Activated naive CD4-positive, alpha-beta T cell treated with anti-CD3 and anti-CD28 coated beads for 36 hours (primary cell): ENCODE measurements at regions of chr4 and their contacts with region 1.

Region 1: GRCh38 chr4:164779811-164780216 is 25.9 kb downstream of the SMIM31 start:
- DNase-seq: peak; percentile 51
- H3K4me3 Mint-ChIP-seq: no peak overlapping the region
- H3K27ac Mint-ChIP-seq: no peak overlapping the region
- H3K4me1 Mint-ChIP-seq: no peaks in the 10 kb centered on the region
- H3K27me3 Mint-ChIP-seq: no peaks in the 10 kb centered on the region

Region 2: DNA sequence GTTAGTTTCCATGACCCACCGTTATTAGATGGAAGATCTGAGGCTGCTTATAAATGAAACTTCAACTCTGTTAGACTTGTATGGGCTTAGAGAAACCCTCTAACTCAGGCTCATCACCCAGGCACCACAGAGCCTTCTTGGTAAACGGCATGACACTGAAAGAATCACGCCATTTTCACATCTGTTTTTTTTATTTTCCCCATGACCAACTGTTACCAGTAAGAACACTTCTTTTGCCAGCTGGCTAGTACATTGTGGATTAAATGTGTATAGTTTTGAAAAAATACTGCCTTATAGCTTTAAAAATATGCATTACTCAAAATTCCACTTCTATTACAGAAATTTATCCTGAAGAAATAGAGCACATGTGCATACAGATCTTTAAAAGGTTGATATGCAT is 49.1 kb after region 1 on chr4:
- CTCF ChIA-PET with region 1: no interaction called
- intact Hi-C with region 1: no loop called
- DNase-seq: no peak
- H3K4me3 Mint-ChIP-seq: no peak overlapping the region
- H3K27ac Mint-ChIP-seq: no peak overlapping the region
- H3K4me1 Mint-ChIP-seq: no peaks in the 10 kb centered on the region
- H3K27me3 Mint-ChIP-seq: peaks cover 2% of the 10 kb centered on the region

Region 3: DNA sequence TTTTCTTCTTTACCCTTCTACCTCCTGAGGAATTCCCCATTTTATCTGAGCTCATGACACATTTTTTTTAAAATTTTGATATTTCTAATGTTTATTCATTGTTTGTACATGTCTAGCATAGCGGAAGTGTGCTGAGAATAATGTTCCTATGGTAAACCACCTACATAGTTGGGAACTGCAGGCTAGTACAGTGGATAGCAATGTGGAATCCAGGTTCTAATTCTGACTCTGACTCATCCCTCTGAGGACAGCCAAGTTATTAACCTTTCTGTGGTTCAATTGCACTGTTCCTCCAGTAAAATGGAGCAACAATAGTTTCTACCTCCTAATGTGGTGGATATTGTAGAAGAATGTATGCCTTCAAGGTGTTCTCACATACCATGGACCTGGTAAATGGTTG is 76.6 kb after region 1 on chr4:
- CTCF ChIA-PET with region 1: no interaction called
- intact Hi-C with region 1: no loop called
- DNase-seq: no peak
- H3K4me3 Mint-ChIP-seq: no peak overlapping the region
- H3K27ac Mint-ChIP-seq: no peak overlapping the region
- H3K4me1 Mint-ChIP-seq: no peaks in the 10 kb centered on the region
- H3K27me3 Mint-ChIP-seq: peaks cover 3% of the 10 kb centered on the region

Region 4: GRCh38 chr4:164997324-164997723 is 217.5 kb after region 1 on chr4:
- CTCF ChIA-PET with region 1: no interaction called
- intact Hi-C with region 1: loop called (anchors 10 kb)
- DNase-seq: no peak
- H3K4me3 Mint-ChIP-seq: no peak overlapping the region
- H3K27ac Mint-ChIP-seq: no peak overlapping the region
- H3K4me1 Mint-ChIP-seq: no peaks in the 10 kb centered on the region
- H3K27me3 Mint-ChIP-seq: peaks cover 5% of the 10 kb centered on the region

Region 5: DNA sequence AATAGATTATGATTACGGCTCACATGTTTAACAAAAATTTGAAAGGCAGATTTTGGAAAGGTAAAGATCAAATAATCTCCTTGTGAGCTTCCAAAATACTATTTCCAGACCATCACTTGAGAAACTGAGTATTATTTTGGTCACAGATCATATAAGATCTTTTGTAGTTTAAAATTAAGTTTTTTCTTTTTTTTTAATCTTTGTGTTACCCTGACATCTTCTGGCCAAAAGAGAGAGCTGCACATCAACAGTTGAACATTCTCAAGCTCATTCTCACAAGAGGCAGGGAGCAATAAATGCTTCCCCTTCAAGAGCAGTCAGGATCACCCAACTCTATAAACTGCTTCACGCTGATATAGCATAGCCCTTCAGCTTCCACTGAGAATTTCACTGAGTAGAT is 317.0 kb after region 1 on chr4:
- CTCF ChIA-PET with region 1: no interaction called
- intact Hi-C with region 1: loop called (anchors 1 kb)
- DNase-seq: no peak
- H3K4me3 Mint-ChIP-seq: no peak overlapping the region
- H3K27ac Mint-ChIP-seq: no peak overlapping the region
- H3K4me1 Mint-ChIP-seq: no peaks in the 10 kb centered on the region
- H3K27me3 Mint-ChIP-seq: no peaks in the 10 kb centered on the region